Ascending aorta (tissue), 2 donors: ENCODE measurements at regions of chr7 and their contacts with region 1.

Region 1: GRCh38 chr7:2632733-2633537 is 1.1 kb downstream of the TTYH3 start:
- DNase-seq: peak; percentile 54 to 84
- H3K4me3 ChIP-seq: peak overlapping the region; percentile 76 to 85
- H3K27ac ChIP-seq: peak overlapping the region; percentile 80 to 87
- H3K4me1 ChIP-seq: peaks cover 20 to 36% of the 10 kb centered on the region in 2 donors
- H3K27me3 ChIP-seq: no peaks in the 10 kb centered on the region
- CTCF ChIP-seq: no peak

Region 2: DNA sequence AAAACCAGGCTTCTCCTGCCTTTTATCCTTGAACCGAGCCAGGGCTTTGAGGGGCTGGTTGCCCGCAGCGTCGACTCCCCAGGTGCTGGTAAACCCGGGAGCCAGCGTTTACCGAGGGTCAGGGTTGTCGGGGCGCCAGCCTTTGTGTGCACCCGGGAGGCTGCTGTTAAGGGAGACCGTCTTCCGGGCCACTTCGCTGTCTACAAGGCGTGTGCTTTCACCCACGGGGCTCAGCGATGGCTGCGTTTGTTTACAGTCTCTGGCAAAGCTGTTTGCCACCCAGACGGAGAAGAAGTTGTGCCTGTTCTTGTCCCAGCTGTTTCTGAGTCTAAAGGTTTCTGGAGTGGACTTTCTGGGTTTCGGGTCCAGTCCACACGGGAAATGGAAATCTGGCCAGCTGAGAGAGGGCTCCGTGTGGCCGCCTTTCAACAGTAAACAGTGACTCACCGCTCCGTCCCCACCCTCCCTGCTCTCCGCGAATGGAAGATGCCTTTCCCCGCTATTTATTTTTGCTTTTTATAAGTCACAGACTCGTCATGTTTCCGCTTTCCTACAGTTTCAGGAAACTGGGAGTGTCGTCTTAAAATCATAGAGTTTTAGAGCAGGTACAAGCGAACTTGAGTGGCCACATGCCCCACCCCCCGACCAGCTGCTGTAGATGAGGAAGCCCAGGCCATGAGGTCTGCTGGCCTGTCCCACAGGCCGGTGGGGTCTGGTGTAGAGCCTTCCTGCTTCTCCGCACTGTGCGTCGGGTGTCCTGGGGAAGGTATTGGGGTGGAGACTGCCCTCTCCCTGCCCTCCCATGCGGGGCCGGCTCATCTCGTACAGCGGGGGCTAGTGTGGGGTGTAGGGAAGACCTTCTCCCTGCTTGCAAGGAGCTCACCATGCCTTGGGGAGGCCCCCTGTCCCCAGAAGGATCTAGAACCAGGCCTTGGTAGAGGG is 1100.2 kb before region 1 on chr7:
- intact Hi-C with region 1: loop called (anchors 10 kb)
- DNase-seq: peak; percentile 88 to 96
- H3K4me3 ChIP-seq: peak overlapping the region; percentile 76 to 91
- H3K27ac ChIP-seq: peak overlapping the region; percentile 98 to 99
- H3K4me1 ChIP-seq: peaks cover 9 to 40% of the 10 kb centered on the region in 2 donors
- H3K27me3 ChIP-seq: no peaks in the 10 kb centered on the region
- CTCF ChIP-seq: no peak

Region 3: GRCh38 chr7:2403014-2403717 is 229.8 kb before region 1 on chr7 and contains the start of gene CHST12:
- intact Hi-C with region 1: loop called (anchors 5 kb)
- DNase-seq: peak; percentile 73 to 96
- H3K4me3 ChIP-seq: peak within 1 kb of the TSS; percentile 99
- H3K27ac ChIP-seq: peak within 1 kb of the TSS; percentile 66 to 78
- H3K4me1 ChIP-seq: peaks cover 14 to 29% of the 10 kb centered on the region in 2 donors
- H3K27me3 ChIP-seq: no peaks in the 10 kb centered on the region
- CTCF ChIP-seq: no peak
- total RNA-seq, gene CHST12: 79.4 TPM

Region 4: GRCh38 chr7:2613931-2614600 is 18.9 kb before region 1 on chr7:
- intact Hi-C with region 1: loop called (anchors 1 kb)
- DNase-seq: peak; percentile 75 to 95
- H3K4me3 ChIP-seq: peak overlapping the region in 1 of 2 donors; percentile 54
- H3K27ac ChIP-seq: peak overlapping the region; percentile 66 to 95
- H3K4me1 ChIP-seq: peaks cover 17 to 40% of the 10 kb centered on the region in 2 donors
- H3K27me3 ChIP-seq: no peaks in the 10 kb centered on the region
- CTCF ChIP-seq: no peak

Region 5: DNA sequence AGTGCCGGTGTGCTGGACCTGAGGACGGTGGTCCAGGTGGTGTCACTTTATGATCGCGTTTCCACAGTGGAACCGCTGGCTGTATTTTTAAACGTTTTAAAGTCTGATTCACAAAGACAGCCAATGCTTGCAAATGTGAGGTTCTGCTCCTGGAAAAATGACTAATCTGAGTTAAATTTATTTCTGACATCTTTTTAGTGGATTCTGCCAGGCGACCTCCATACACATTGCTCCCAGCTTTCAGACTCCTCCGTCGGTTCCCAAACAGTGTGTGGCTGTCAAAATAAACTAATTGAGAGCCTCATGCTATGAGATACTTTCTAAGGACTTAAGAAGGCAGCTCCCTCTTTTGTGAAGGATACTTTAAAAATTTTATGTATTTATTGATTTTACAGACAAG is 13.8 kb before region 1 on chr7:
- intact Hi-C with region 1: loop called (anchors 1 kb)
- DNase-seq: no peak
- H3K4me3 ChIP-seq: peak overlapping the region; percentile 31 to 41
- H3K27ac ChIP-seq: peak overlapping the region in 1 of 2 donors; percentile 37
- H3K4me1 ChIP-seq: peaks cover 13 to 45% of the 10 kb centered on the region in 2 donors
- H3K27me3 ChIP-seq: no peaks in the 10 kb centered on the region
- CTCF ChIP-seq: no peak

Region 6: DNA sequence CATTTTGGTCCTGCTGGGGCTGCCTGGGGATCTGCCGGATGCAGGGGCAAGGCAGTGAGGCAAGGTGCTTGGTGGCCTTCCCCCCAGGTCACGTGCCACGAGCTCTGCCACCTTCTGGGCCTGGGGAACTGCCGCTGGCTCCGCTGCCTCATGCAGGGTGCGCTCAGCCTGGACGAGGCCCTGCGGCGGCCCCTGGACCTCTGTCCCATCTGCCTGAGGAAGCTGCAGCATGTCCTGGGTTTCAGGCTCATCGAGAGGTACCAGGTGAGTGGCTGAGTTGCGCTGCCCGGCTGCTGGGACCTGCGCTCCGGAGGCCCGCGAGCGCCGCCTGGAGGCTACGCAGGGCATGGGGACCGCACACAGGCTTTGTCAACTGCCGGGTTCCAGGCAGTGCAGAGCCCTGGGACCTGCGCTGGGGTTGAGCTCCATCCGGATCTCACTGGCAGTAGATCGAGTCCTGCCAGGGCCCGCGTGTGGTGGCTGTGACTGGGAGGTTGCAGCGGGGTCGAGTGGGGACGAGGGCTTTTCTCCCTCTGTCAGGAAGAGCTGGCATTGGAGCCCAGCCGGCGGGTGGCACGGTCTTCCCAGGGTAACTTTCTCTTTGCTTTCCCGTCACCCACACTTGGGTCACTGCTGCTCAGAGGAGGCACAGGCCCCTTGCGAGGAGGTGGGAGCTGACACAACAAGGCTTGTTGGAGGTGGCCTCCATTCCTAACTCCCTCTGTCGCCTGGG is 76.8 kb after region 1 on chr7:
- intact Hi-C with region 1: no loop called
- DNase-seq: no peak
- H3K4me3 ChIP-seq: peak overlapping the region; percentile 1 to 6
- H3K27ac ChIP-seq: no peak overlapping the region
- H3K4me1 ChIP-seq: no peaks in the 10 kb centered on the region
- H3K27me3 ChIP-seq: no peaks in the 10 kb centered on the region
- CTCF ChIP-seq: peak; percentile 70 to 83 (median 82)

Region 7: GRCh38 chr7:2729701-2730417 is 96.9 kb after region 1 on chr7:
- intact Hi-C with region 1: no loop called
- DNase-seq: peak in 1 of 2 donors; percentile 65
- H3K4me3 ChIP-seq: peak overlapping the region in 1 of 2 donors; percentile 42
- H3K27ac ChIP-seq: peak overlapping the region in 1 of 2 donors; percentile 37
- H3K4me1 ChIP-seq: peaks cover 4 to 5% of the 10 kb centered on the region in 2 donors
- H3K27me3 ChIP-seq: no peaks in the 10 kb centered on the region
- CTCF ChIP-seq: no peak

Region 8: DNA sequence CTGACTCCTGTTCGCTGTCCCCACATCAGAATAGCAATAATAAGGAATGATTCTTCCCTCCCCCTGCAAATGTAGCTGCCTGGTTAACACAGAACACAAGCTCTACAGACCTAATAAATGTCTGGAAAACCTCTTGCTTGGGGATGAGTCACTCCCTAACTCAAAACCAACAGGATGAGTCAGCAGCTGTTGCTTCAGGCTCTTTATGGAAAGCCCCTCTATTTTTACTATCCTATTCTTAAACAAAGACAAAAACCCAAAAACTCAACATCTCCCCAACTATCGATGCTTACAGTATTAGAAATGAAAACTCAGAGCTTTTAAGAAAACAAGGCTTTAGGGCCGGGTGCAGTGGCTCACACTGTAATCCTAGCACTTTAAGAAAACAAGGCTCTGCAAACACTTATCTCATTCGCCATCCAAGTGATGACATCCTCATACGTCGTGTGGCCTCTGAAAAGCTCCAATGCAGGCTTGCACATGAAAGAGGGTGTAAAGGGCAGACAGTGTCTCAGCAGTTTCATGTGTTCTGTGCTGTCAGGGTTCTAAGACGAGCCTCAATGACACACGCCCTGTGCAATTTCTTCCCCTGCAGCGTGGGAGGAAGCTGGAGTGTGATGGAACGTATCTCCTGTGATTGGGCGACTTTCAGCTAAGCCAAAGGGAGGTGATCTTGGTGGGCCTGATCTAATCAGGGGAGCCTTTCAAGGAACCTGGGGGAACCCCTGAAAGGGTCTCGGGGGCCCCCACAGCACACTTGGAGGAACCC is 125.2 kb after region 1 on chr7:
- intact Hi-C with region 1: loop called (anchors 5 kb)
- DNase-seq: peak in 1 of 2 donors; percentile 83
- H3K4me3 ChIP-seq: peak overlapping the region in 1 of 2 donors; percentile 31
- H3K27ac ChIP-seq: peak overlapping the region; percentile 79 to 80
- H3K4me1 ChIP-seq: peaks cover 29 to 40% of the 10 kb centered on the region in 2 donors
- H3K27me3 ChIP-seq: no peaks in the 10 kb centered on the region
- CTCF ChIP-seq: no peak